K562 (cell line): ENCODE measurements at regions of chr4 and their contacts with region 1.

Region 1: GRCh38 chr4:105146276-105147015 is at the start of gene TET2:
- DNase-seq: peak; percentile 72 to 83 (median 76)
- ATAC-seq: peak; percentile 88
- H3K4me3 ChIP-seq: peak within 1 kb of the TSS; percentile 94
- H3K27ac ChIP-seq: peak within 1 kb of the TSS; percentile 93
- H3K4me1 ChIP-seq: peaks cover 5 to 7% of the 10 kb centered on the region in 2 experiments; a peak in 4 of 5 replicates
- H3K27me3 ChIP-seq: no peaks in the 10 kb centered on the region
- CTCF ChIP-seq: no peak
- EP300 ChIP-seq: no peak
- POLR2A ChIP-seq: peak; percentile 76
- RAD21 ChIP-seq: no peak
- polyA plus RNA-seq, gene TET2: 0.80 to 1.4 TPM

Region 2: DNA sequence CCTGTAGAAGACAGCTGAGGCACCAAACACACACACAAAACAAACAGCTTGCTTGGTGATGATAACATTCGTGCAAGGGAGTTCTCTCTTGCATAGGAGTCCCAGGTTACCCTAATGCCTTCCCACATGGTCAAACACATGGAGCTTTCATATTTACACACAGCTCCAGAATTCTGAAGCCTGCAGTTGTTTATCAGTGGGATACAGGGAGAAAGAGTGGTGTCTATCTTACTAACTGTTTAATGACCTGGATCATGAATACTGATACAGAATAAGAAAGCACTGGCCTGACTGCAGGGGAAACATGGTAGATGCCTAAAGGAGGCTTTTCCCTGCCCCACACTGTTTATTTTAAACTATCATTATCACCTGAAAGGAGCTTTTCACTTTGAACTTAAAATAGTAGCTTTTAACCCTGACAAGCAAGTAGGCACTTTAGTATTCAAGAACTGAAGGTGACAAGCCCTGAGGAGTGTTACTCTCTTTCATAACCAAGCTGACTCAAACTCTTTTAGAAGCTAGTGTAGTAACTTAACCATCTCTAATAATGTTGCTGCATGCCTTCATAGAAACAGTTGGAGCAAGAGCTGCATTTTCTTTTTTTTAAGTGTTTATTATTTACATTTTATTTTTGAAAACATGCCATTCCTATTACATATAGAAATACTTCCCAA is 15.8 kb after region 1 on chr4:
- CTCF ChIA-PET with region 1: no interaction called
- POLR2A ChIA-PET with region 1: interaction called, 10 read pairs
- in situ Hi-C with region 1: no loop called
- intact Hi-C with region 1: no loop called
- DNase-seq: peak; percentile 16 to 62 (median 44)
- ATAC-seq: peak; percentile 85
- H3K4me3 ChIP-seq: no peak overlapping the region
- H3K27ac ChIP-seq: peak overlapping the region; percentile 34; the same call in 1 of the 3 replicates
- H3K4me1 ChIP-seq: no peaks in the 10 kb centered on the region; a peak in 2 of 5 replicates
- H3K27me3 ChIP-seq: no peaks in the 10 kb centered on the region
- CTCF ChIP-seq: no peak
- EP300 ChIP-seq: no peak
- POLR2A ChIP-seq: no peak
- RAD21 ChIP-seq: no peak

Region 3: DNA sequence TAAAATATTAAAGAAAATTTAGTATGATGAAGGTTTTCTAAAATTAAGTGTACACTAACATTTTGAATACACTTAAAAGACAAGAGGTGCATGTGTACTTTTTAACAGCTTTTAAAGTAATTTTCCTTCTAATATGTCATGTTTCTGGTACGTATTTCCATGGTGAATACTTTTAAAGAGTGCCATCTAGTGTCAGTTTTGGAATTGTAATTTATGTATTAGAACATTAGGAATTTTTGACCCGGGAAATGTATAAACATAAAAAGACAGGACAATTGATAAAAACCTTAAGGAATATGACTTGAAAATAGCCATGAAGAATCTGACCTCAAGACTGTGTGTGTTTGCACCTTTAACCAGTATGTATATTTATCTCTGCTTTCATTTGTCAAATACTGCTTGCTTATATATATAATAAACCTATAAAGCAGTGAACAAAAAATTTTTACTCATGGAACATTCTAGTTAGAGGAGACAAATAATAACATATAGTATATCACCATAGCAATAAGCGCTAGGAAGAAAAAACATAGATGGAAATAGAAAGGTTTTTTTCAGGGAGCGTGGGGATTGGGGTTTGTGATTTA is 569.3 kb after region 1 on chr4:
- CTCF ChIA-PET with region 1: no interaction called
- POLR2A ChIA-PET with region 1: no interaction called
- in situ Hi-C with region 1: no loop called
- intact Hi-C with region 1: loop called (anchors 5 kb)
- DNase-seq: peak in 2 of 4 experiments; percentile 28 to 36
- ATAC-seq: peak; percentile 61; the same call in 2 of the 3 replicates
- H3K4me3 ChIP-seq: no peak overlapping the region
- H3K27ac ChIP-seq: peak overlapping the region; percentile 13; the same call in 1 of the 3 replicates
- H3K4me1 ChIP-seq: no peaks in the 10 kb centered on the region; a peak in 1 of 5 replicates
- H3K27me3 ChIP-seq: no peaks in the 10 kb centered on the region
- CTCF ChIP-seq: peak in 2 of 3 experiments; percentile 20 to 63; a peak in 3 of 6 replicates
- EP300 ChIP-seq: no peak
- POLR2A ChIP-seq: no peak
- RAD21 ChIP-seq: peak; percentile 32 to 38; a peak in 2 of 4 replicates